SK-N-SH (cell line): ENCODE measurements at regions of chr15 and their contacts with region 1.

Region 1: DNA sequence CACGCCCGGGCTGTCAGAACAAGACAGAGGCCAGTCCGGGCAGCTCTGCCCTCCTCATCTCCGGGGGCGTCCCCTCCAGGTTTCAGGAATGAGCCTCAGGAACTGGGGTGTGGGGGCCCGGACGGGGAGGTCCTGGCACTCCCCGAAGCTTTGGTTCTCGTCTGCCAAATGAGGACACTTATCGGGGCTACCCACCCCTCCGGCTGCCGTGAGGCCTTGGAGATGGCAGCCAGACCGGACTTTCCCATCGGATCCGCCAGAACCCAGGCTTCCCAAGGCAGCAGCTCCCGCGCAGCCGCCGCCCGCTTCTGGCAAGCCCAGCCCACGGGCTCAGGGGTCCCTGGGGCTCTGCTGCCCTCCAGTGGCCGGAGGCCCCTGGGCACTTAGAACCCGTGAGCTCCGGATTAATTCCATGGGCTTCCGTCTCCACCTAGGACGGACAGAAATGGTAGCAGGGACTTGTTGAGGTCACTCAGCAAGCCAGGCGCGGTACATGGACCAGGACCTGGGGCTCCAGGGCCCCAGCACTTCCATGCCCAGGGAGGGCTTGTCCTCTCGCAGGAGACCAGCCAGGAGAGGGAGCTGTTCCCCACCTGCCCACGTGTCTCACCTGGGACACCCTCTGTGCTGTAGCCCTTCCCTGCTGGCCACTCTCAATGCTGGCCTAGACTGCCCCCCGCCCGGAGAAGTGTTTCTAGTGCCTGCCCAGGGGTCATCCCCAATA is 89.4 kb downstream of the LINGO1 start:
- DNase-seq: peak; percentile 95
- H3K4me3 ChIP-seq: peak overlapping the region; percentile 42 to 46; a peak in 3 of 4 replicates
- H3K27ac ChIP-seq: peak overlapping the region; percentile 16 to 17; a peak in 1 of 4 replicates
- H3K4me1 ChIP-seq: peaks cover 16 to 25% of the 10 kb centered on the region in 2 experiments; a peak in 3 of 4 replicates
- H3K27me3 ChIP-seq: no peaks in the 10 kb centered on the region
- CTCF ChIP-seq: peak; percentile 97
- EP300 ChIP-seq: no peak
- RAD21 ChIP-seq: peak; percentile 99

Region 2: DNA sequence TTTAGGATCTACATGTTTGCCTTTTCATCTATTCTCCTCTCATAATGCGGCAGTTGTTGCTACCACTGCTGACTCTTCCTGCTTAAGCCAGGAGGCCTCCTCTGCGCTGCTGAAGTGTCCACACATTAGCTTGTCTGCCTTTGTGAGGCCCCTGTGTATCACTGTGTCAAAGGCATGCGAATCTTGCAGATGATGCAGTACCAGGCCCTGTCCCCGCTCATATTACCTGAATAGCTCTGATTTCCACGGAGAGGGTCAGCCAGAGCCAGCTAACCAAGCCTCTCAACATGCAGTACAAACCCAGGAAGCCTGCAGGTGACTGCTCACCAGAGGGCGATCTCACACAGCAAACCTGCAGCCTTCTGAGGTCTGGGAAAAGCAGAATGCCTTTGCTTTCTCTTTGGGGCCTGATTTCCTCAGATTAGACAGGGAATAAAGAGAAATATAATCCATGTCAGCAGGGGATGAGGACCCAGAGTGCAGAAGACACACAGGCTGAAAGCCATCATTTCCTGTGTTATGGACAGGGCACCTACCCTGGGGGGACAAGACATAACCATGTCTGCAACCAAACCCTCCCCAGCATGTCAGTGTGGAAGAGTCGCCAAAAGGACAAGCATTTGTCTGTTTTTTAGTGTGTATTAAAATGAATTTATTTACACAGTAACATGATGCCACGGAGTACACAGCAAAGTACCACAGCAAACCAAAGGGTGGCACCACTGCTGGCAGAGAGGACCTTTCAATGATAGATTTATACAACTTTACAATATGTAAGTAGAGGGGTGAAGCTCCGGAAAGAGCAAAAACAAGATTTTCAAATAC is 435.6 kb before region 1 on chr15:
- CTCF ChIA-PET with region 1: interaction called, 124 read pairs
- POLR2A ChIA-PET with region 1: interaction called, 3 read pairs
- DNase-seq: peak; percentile 72
- H3K4me3 ChIP-seq: no peak overlapping the region
- H3K27ac ChIP-seq: peak overlapping the region in 1 of 2 experiments; percentile 22; a peak in 1 of 4 replicates
- H3K4me1 ChIP-seq: peaks cover 0 to 17% of the 10 kb centered on the region in 2 experiments; a peak in 2 of 4 replicates
- H3K27me3 ChIP-seq: no peaks in the 10 kb centered on the region
- CTCF ChIP-seq: peak; percentile 68
- EP300 ChIP-seq: no peak
- RAD21 ChIP-seq: peak; percentile 89

Region 3: DNA sequence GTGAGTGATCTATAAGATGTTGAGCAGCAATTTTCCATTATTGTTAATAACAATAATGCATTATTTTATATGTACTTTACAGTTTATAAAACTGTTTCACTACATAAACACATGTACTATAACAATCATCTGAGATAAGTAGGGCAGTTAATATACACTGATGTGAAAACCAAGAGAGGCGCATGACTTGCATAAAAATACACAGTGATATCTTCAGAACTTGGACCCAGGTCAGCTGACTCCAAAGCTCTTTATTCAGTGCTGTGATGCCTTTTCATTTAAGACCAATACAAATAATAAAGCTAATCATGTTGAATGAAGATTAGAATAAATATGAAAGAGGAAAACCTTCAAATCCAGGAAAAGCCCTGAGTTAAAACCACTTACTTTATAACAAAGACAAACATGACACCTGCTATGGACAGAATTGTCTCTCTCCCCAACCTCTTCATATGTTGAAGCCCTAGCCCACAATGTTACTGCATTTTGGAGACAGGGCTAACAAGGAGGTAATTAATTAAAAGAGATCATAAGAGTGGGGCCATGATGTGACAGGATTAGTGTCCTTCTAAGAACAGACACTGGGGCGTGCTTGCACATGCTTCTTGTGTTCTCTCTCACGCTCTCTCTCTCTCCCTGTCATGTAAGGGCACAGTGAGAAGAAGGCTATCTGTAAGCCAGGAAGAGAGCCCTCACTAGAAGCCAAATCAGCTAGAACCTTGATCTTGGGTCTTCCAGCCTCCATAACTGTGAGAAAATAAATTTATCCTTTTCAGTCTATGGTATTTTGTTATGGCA is 416.6 kb before region 1 on chr15:
- CTCF ChIA-PET with region 1: interaction called, 134 read pairs
- POLR2A ChIA-PET with region 1: no interaction called
- DNase-seq: no peak
- H3K4me3 ChIP-seq: no peak overlapping the region
- H3K27ac ChIP-seq: no peak overlapping the region
- H3K4me1 ChIP-seq: no peaks in the 10 kb centered on the region
- H3K27me3 ChIP-seq: no peaks in the 10 kb centered on the region
- CTCF ChIP-seq: no peak
- EP300 ChIP-seq: no peak
- RAD21 ChIP-seq: no peak

Region 4: GRCh38 chr15:77496710-77497103 is 46.6 kb before region 1 on chr15:
- CTCF ChIA-PET with region 1: interaction called, 80 read pairs
- POLR2A ChIA-PET with region 1: interaction called, 3 read pairs
- DNase-seq: peak; percentile 81
- H3K4me3 ChIP-seq: peak overlapping the region; percentile 15 to 54; a peak in 2 of 4 replicates
- H3K27ac ChIP-seq: peak overlapping the region; percentile 75 to 98
- H3K4me1 ChIP-seq: peaks cover 47 to 49% of the 10 kb centered on the region in 2 experiments
- H3K27me3 ChIP-seq: no peaks in the 10 kb centered on the region
- CTCF ChIP-seq: peak; percentile 92
- EP300 ChIP-seq: 0 out of 4 replicates have a peak, but pooled peaks of 1 of the 2 experiments have one; percentile 6
- RAD21 ChIP-seq: peak; percentile 90

Region 5: DNA sequence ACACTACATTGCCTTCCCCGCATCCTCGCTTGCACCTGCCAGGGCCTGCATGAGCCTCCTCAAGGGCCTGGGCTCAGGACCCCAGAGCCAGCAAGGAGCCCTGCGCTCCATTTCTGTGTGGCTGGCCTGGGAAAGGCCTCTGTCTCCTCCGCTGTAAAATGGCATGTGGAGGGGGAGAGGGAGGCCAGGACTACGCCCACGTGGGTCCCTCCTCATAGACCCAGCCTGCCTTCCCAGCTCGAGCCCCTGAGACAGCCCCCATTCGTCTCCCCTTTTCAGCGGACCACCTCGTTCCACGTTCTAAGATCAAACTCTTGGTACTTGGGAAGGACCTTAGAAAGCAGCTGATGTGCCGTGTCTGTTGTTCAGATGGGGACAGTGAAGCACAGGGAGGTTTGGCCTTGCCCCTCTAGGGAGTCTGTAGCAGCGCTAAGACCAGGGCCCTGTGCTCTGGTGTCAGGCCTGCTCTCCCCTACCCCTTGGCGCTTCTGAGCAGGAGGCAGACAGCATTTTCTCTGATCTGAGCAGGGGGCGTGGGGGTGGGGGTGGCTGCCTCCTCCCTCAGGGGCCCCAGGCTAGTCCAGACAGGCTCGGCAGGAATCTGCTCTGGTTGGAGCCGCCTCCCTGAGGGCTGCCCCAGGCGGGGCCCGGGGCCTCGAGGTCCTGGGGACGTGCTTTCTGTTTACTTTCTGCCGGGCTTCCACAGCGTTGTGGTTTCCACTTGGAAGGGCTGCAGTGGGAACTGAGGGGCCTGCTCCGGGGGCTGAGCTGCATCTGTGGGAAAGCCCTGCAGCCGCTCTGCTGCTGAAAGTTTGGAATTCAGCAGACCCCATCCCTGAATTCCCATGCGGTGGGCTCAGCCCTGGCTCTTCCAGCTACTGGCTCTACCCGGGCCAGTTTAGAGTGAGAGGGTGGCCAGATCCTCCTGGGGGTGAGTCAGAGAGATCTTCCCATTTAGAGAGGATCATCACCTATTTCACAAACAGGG is 16.2 kb before region 1 on chr15:
- CTCF ChIA-PET with region 1: interaction called, 24 read pairs
- POLR2A ChIA-PET with region 1: interaction called, 4 read pairs
- DNase-seq: peak; percentile 55
- H3K4me3 ChIP-seq: no peak overlapping the region
- H3K27ac ChIP-seq: no peak overlapping the region; a peak in 1 of 4 replicates
- H3K4me1 ChIP-seq: peaks cover 0 to 32% of the 10 kb centered on the region in 2 experiments; a peak in 2 of 4 replicates
- H3K27me3 ChIP-seq: no peaks in the 10 kb centered on the region
- CTCF ChIP-seq: no peak
- EP300 ChIP-seq: no peak
- RAD21 ChIP-seq: no peak

Region 6: DNA sequence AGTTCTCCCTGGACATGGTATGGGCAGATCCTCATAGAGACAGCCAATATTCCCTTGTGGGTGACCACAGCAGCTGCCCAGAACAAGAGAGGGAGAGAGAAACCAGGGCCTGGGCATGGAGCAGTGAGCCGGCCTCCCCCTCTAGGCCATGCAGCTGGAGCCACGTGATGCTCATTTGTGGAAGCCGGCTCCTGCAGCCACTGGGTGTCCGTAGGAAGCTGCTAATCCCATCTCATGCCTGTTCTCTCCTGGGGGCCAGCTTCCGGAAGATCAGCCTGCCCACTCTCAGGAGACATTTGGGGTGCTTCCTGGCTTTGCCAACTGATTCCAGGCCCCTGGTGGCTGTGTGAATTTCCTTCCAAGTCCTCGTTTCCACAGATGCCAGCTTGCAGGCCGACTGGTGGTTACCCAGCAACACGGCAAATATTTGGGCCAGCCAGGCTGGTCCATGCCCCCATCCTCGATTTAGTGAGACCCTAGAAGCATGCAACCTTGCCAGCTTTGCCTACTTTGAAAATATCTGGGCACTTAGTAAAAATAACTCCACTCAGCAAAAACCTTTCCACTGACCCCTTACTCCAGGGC is 34.1 kb after region 1 on chr15:
- CTCF ChIA-PET with region 1: interaction called, 12 read pairs
- POLR2A ChIA-PET with region 1: no interaction called
- DNase-seq: peak; percentile 71
- H3K4me3 ChIP-seq: no peak overlapping the region
- H3K27ac ChIP-seq: peak overlapping the region in 1 of 2 experiments; percentile 4; a peak in 1 of 4 replicates
- H3K4me1 ChIP-seq: peaks cover 0 to 32% of the 10 kb centered on the region in 2 experiments; a peak in 2 of 4 replicates
- H3K27me3 ChIP-seq: no peaks in the 10 kb centered on the region; the same call in 1 of the 2 replicates
- CTCF ChIP-seq: no peak
- EP300 ChIP-seq: no peak
- RAD21 ChIP-seq: no peak

Region 7: GRCh38 chr15:77821188-77821958 is 278.1 kb after region 1 on chr15:
- CTCF ChIA-PET with region 1: interaction called, 12 read pairs
- POLR2A ChIA-PET with region 1: no interaction called
- DNase-seq: peak; percentile 88
- H3K4me3 ChIP-seq: no peak overlapping the region; a peak in 1 of 4 replicates
- H3K27ac ChIP-seq: no peak overlapping the region
- H3K4me1 ChIP-seq: peaks cover 0 to 17% of the 10 kb centered on the region in 2 experiments; a peak in 1 of 4 replicates
- H3K27me3 ChIP-seq: peaks cover 38% of the 10 kb centered on the region
- CTCF ChIP-seq: peak; percentile 80
- EP300 ChIP-seq: no peak
- RAD21 ChIP-seq: peak; percentile 92